WTC11 (cell line): ENCODE measurements at regions of chr21 and their contacts with region 1.

Region 1: DNA sequence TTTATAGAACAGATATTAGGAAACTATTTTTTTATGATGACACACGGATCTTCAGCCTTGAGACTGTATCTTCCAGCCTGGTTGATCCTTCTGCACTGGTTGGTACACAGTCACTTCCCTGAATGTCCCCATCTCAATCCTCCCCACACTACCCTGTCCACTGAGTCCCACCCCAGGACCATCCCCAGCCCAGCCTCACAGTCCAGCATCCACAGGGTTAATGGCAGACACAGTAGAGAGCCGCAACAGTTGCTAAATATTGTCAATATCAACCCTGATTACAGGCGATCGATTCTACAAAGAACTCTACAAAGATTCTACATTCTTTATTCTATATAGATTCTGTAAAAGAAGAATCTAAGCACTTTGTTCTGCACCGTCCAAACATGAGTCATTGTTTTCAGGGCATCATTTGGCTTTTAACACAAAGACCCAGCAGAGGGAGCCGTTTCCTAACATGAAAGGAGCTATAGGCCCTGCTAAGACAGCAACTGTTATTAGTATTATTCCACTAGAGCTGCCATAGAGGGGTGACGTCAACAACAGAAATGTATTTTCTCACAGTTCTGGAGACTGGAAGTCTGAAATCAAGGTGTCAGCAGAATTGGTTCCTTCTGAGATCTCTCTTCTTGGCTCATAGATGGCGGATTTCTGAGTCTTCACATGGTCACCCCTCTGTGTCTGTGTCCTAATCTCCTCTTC is 30.1 kb upstream of the IFNAR2 start:
- DNase-seq: peak; percentile 56
- ATAC-seq: peak; percentile 82
- H3K4me3 Mint-ChIP-seq: no peak overlapping the region
- H3K27ac Mint-ChIP-seq: no peak overlapping the region
- H3K4me1 Mint-ChIP-seq: peaks cover 16% of the 10 kb centered on the region
- H3K27me3 Mint-ChIP-seq: peaks cover 4% of the 10 kb centered on the region; the same call in 1 of the 2 replicates
- CTCF ChIP-seq: peak; percentile 34; the same call in 1 of the 2 replicates

Region 2: GRCh38 chr21:32921632-32922230 is 277.9 kb before region 1 on chr21:
- CTCF ChIA-PET with region 1: interaction called, 11 read pairs
- POLR2A ChIA-PET with region 1: no interaction called
- DNase-seq: peak; percentile 72
- ATAC-seq: peak; percentile 68
- H3K4me3 Mint-ChIP-seq: no peak overlapping the region
- H3K27ac Mint-ChIP-seq: no peak overlapping the region
- H3K4me1 Mint-ChIP-seq: peaks cover 18% of the 10 kb centered on the region
- H3K27me3 Mint-ChIP-seq: peaks cover 3% of the 10 kb centered on the region; the same call in 1 of the 2 replicates
- CTCF ChIP-seq: peak; percentile 46; the same call in 1 of the 2 replicates

Region 3: DNA sequence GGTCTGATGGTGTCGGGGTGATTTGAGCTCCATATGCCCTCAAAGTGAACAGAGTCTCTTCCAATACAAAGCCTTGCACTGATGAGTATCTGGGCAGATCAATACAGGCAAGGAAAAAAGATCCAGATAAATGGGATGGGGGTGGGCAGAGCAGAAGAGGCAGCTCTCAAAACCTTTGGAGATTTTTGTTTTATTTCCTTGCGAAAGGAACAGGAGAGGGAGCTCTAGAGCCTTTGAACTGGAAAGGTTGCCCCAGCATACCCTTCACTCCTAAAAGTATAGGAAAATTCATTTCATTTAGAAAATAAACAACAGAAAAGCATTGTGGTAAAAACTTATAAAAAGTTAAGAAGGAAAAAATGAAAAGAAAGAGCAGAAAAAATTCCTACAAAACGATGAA is 205.4 kb before region 1 on chr21:
- CTCF ChIA-PET with region 1: interaction called, 44 read pairs
- POLR2A ChIA-PET with region 1: no interaction called
- DNase-seq: no peak
- ATAC-seq: peak; percentile 56
- H3K4me3 Mint-ChIP-seq: no peak overlapping the region
- H3K27ac Mint-ChIP-seq: no peak overlapping the region
- H3K4me1 Mint-ChIP-seq: peaks cover 8% of the 10 kb centered on the region
- H3K27me3 Mint-ChIP-seq: no peaks in the 10 kb centered on the region; the same call in 1 of the 2 replicates
- CTCF ChIP-seq: no peak

Region 4: GRCh38 chr21:33025489-33026442 is 173.9 kb before region 1 on chr21 and contains the start of gene OLIG2:
- CTCF ChIA-PET with region 1: interaction called, 22 read pairs
- POLR2A ChIA-PET with region 1: no interaction called
- DNase-seq: peak; percentile 95
- ATAC-seq: peak; percentile 87
- H3K4me3 Mint-ChIP-seq: peak within 1 kb of the TSS; percentile 73
- H3K27ac Mint-ChIP-seq: no peak within 1 kb of the TSS
- H3K4me1 Mint-ChIP-seq: peaks cover 60% of the 10 kb centered on the region
- H3K27me3 Mint-ChIP-seq: peaks cover 100% of the 10 kb centered on the region
- CTCF ChIP-seq: no peak
- total RNA-seq, gene OLIG2: 0.60 to 0.79 TPM (median 0.71 TPM) in 3 replicates

Region 5: GRCh38 chr21:33386222-33386784 is 186.6 kb after region 1 on chr21:
- CTCF ChIA-PET with region 1: interaction called, 10 read pairs
- POLR2A ChIA-PET with region 1: no interaction called
- DNase-seq: peak; percentile 50
- ATAC-seq: peak; percentile 72
- H3K4me3 Mint-ChIP-seq: no peak overlapping the region
- H3K27ac Mint-ChIP-seq: no peak overlapping the region
- H3K4me1 Mint-ChIP-seq: peaks cover 11% of the 10 kb centered on the region
- H3K27me3 Mint-ChIP-seq: no peaks in the 10 kb centered on the region; the same call in 1 of the 2 replicates
- CTCF ChIP-seq: peak; percentile 28

Region 6: DNA sequence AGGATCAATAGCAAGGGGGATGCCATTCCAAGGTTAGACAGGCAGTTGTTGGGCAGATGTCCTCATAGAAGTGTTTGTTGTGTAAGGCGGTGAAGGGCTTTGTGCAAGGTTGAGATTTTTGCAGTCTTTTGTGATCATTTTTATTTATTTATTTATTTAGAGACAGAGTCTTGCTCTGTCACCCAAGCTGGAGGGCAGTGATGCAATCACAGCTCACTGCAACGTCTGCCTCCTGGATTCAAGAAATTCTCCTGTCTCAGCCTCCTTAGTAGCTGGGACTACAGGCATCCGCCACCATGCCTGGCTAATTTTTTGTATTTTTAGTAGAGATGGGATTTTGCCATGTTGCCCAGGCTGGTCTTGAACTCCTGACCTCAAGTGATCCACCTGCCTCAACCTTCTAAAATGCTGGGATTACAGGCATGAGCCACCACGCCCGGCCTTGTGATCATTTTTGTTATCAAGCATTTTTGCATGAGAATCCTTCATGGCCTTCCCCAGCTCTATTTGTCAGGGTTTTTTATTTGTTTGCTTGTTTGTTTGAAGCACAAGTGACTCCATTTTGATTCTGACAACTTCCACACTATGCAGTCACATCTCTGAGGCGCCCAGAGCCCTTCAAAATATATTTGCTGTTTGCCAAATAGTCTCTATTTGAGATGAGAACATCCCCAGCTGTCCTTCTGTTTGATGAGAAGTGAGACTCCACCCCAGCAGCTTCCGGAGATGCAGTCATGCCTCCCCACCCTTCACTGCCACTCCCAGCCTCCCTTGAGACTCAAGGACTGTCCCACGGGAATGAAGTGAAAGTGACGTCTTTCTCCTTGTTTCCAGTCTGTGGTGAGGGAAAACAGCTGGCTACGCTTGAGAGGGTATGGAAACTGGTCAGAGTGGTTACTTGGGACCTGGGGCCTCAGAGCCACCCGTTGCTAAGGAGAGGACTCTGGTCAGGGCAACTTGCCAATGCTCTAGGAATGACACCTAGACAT is 242.1 kb after region 1 on chr21:
- CTCF ChIA-PET with region 1: interaction called, 26 read pairs
- POLR2A ChIA-PET with region 1: no interaction called
- DNase-seq: no peak
- ATAC-seq: no peak
- H3K4me3 Mint-ChIP-seq: no peak overlapping the region
- H3K27ac Mint-ChIP-seq: peak overlapping the region; percentile 27; the same call in 1 of the 2 replicates
- H3K4me1 Mint-ChIP-seq: no peaks in the 10 kb centered on the region
- H3K27me3 Mint-ChIP-seq: no peaks in the 10 kb centered on the region
- CTCF ChIP-seq: no peak